CD4-positive, alpha-beta T cell (primary cell): ENCODE measurements at regions of chr17 and their contacts with region 1.

Region 1: GRCh38 chr17:59964482-59965328 is at the start of gene RNFT1:
- DNase-seq: peak; percentile 84 to 95 (median 90)
- ATAC-seq: peak; percentile 87
- H3K4me3 ChIP-seq: peak within 1 kb of the TSS; percentile 100
- H3K4me3 Mint-ChIP-seq: peak within 1 kb of the TSS; percentile 94
- H3K27ac ChIP-seq: peak within 1 kb of the TSS; percentile 80 to 88
- H3K27ac Mint-ChIP-seq: peak within 1 kb of the TSS; percentile 89
- H3K4me1 ChIP-seq: peaks cover 16% of the 10 kb centered on the region
- H3K4me1 Mint-ChIP-seq: peaks cover 25% of the 10 kb centered on the region
- H3K27me3 ChIP-seq: no peaks in the 10 kb centered on the region
- H3K27me3 Mint-ChIP-seq: no peaks in the 10 kb centered on the region
- CTCF ChIP-seq: no peak
- total RNA-seq, gene RNFT1: 19.8 to 19.9 TPM

Region 2: GRCh38 chr17:59707114-59707970 is 257.4 kb before region 1 on chr17 and contains the starts of genes PTRH2 and VMP1:
- CTCF ChIA-PET with region 1: no interaction called
- POLR2A ChIA-PET with region 1: interaction called, 13 read pairs
- intact Hi-C with region 1: no loop called
- DNase-seq: peak; percentile 67 to 98 (median 81)
- ATAC-seq: peak; percentile 90
- H3K4me3 ChIP-seq: peak within 1 kb of the TSS; percentile 95
- H3K4me3 Mint-ChIP-seq: peak within 1 kb of the TSS; percentile 93
- H3K27ac ChIP-seq: peak within 1 kb of the TSS; percentile 80 to 96
- H3K27ac Mint-ChIP-seq: peak within 1 kb of the TSS; percentile 94
- H3K4me1 ChIP-seq: peaks cover 37% of the 10 kb centered on the region
- H3K4me1 Mint-ChIP-seq: peaks cover 81% of the 10 kb centered on the region
- H3K27me3 ChIP-seq: no peaks in the 10 kb centered on the region
- H3K27me3 Mint-ChIP-seq: no peaks in the 10 kb centered on the region
- CTCF ChIP-seq: no peak
- total RNA-seq, gene PTRH2: 6.5 to 7.3 TPM
- total RNA-seq, gene VMP1: 73.6 to 81.1 TPM

Region 3: DNA sequence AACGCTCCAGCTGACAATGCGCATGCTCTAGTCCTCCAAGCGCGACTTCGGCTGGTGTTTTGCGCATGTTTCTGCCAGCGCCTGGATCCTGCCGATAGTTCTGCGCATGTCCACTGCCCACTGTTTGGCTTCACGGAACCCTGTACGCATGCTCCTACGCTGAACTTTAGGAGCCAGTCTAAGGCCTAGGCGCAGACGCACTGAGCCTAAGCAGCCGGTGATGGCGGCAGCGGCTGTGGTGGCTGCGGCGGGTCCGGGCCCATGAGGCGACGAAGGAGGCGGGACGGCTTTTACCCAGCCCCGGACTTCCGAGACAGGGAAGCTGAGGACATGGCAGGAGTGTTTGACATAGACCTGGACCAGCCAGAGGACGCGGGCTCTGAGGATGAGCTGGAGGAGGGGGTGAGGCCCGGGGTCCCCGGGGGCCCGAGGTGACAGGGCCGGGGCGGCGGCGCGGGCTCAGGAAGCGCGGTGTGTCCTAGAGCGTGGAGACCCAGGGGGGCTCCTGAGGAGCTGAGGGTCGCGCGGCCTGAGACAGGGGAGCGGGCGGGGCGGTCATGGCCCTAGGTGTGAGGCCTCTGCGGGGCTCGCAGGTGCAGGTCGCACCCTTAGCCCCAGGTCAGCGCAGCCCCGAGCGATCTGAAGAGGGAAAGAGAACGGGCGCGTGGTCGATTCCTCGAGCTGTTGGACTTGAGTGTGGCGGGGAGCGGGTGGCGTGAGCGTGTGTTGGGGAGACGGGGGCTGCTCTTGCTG is 71.6 kb before region 1 on chr17 and contains the starts of genes RPS6KB1 and TUBD1:
- CTCF ChIA-PET with region 1: no interaction called
- POLR2A ChIA-PET with region 1: interaction called, 35 read pairs
- intact Hi-C with region 1: loop called in 1 of 2 experiments (anchors 5 kb)
- DNase-seq: peak; percentile 94 to 100 (median 97)
- ATAC-seq: peak; percentile 91
- H3K4me3 ChIP-seq: peak within 1 kb of the TSS; percentile 79
- H3K4me3 Mint-ChIP-seq: peak within 1 kb of the TSS; percentile 98
- H3K27ac ChIP-seq: peak within 1 kb of the TSS; percentile 88 to 94
- H3K27ac Mint-ChIP-seq: peak within 1 kb of the TSS; percentile 94
- H3K4me1 ChIP-seq: peaks cover 44% of the 10 kb centered on the region
- H3K4me1 Mint-ChIP-seq: peaks cover 65% of the 10 kb centered on the region
- H3K27me3 ChIP-seq: no peaks in the 10 kb centered on the region
- H3K27me3 Mint-ChIP-seq: no peaks in the 10 kb centered on the region
- CTCF ChIP-seq: no peak
- total RNA-seq, gene RPS6KB1: 129 to 135 TPM
- total RNA-seq, gene TUBD1: 7.3 to 9.4 TPM

Region 4: DNA sequence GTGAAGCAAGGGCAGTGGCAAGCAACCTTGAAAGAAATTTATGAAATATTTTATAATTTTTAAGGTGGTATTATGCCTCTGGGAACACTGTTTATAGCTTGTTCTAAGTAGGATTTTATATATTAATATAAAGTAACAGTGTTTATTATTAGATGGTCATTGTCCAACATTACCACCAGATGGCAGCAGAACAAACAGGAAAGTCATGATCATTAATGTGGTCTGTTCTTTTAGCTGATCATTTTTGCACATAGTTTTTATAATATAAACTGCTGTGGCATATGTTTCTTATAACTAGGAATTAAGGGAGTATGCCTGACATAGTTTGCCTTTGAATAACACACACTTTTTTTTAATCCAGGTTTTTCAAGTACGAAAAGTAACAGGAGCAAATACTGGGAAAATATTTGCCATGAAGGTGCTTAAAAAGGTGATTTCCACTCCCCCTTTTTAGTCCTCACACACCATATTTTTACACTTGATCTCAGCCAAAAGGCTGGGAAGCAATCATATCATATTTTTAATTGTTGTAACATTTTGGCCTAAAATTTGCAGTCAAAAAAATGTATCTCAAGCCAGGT is 50.3 kb before region 1 on chr17:
- CTCF ChIA-PET with region 1: interaction called, 3 read pairs
- POLR2A ChIA-PET with region 1: interaction called, 3 read pairs
- intact Hi-C with region 1: loop called in 1 of 2 experiments (anchors 10 kb)
- DNase-seq: peak in 4 of 14 experiments; percentile 19 to 70 (median 63)
- ATAC-seq: peak; percentile 77
- H3K4me3 ChIP-seq: no peak overlapping the region
- H3K4me3 Mint-ChIP-seq: no peak overlapping the region
- H3K27ac ChIP-seq: no peak overlapping the region
- H3K27ac Mint-ChIP-seq: no peak overlapping the region
- H3K4me1 ChIP-seq: no peaks in the 10 kb centered on the region
- H3K4me1 Mint-ChIP-seq: peaks cover 5% of the 10 kb centered on the region
- H3K27me3 ChIP-seq: no peaks in the 10 kb centered on the region
- H3K27me3 Mint-ChIP-seq: no peaks in the 10 kb centered on the region
- CTCF ChIP-seq: peak; percentile 76

Region 5: GRCh38 chr17:60036796-60037612 is 72.3 kb after region 1 on chr17:
- CTCF ChIA-PET with region 1: interaction called, 3 read pairs
- POLR2A ChIA-PET with region 1: interaction called, 5 read pairs
- intact Hi-C with region 1: loop called in 1 of 2 experiments (anchors 10 kb)
- DNase-seq: peak; percentile 43 to 86 (median 59)
- ATAC-seq: peak; percentile 97
- H3K4me3 ChIP-seq: no peak overlapping the region
- H3K4me3 Mint-ChIP-seq: no peak overlapping the region
- H3K27ac ChIP-seq: no peak overlapping the region
- H3K27ac Mint-ChIP-seq: no peak overlapping the region
- H3K4me1 ChIP-seq: peaks cover 8% of the 10 kb centered on the region
- H3K4me1 Mint-ChIP-seq: peaks cover 6% of the 10 kb centered on the region
- H3K27me3 ChIP-seq: peaks cover 0 to 21% of the 10 kb centered on the region in 2 experiments
- H3K27me3 Mint-ChIP-seq: peaks cover 21% of the 10 kb centered on the region
- CTCF ChIP-seq: peak; percentile 83

Region 6: GRCh38 chr17:60067854-60068253 is 103.1 kb after region 1 on chr17:
- CTCF ChIA-PET with region 1: no interaction called
- POLR2A ChIA-PET with region 1: no interaction called
- intact Hi-C with region 1: no loop called
- DNase-seq: no peak
- ATAC-seq: no peak
- H3K4me3 ChIP-seq: no peak overlapping the region
- H3K4me3 Mint-ChIP-seq: no peak overlapping the region
- H3K27ac ChIP-seq: no peak overlapping the region
- H3K27ac Mint-ChIP-seq: no peak overlapping the region
- H3K4me1 ChIP-seq: no peaks in the 10 kb centered on the region
- H3K4me1 Mint-ChIP-seq: no peaks in the 10 kb centered on the region
- H3K27me3 ChIP-seq: no peaks in the 10 kb centered on the region
- H3K27me3 Mint-ChIP-seq: no peaks in the 10 kb centered on the region
- CTCF ChIP-seq: no peak